Endothelial cell of umbilical vein (primary cell): ENCODE measurements at regions of chr13 and their contacts with region 1.

Region 1: GRCh38 chr13:19984430-19985218 is 26.1 kb downstream of the ZMYM2 start:
- DNase-seq: peak; percentile 45
- H3K4me3 ChIP-seq: no peak overlapping the region
- H3K27ac ChIP-seq: no peak overlapping the region
- H3K4me1 ChIP-seq: no peaks in the 10 kb centered on the region
- H3K27me3 ChIP-seq: no peaks in the 10 kb centered on the region
- CTCF ChIP-seq: peak; percentile 27 to 50
- POLR2A ChIP-seq: no peak

Region 2: DNA sequence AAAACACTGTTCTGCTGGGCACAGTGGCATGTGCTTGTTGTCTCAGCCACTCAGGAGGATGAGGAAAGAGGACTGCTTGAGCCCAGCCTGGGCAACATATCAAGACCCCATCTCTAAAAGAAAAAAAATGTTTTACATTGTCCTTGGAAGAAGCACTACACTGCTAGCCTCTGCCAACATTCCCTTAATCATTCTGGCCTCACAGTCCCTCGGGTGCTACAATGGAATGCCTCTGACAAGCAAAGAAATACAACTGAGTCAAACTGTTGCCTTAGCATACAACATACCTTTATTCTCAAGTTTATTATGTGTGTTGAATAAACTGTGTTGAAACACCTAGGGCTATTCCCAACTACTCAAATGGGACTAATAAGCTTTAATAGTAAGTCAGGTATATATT is 258.0 kb before region 1 on chr13:
- CTCF ChIA-PET with region 1: no interaction called
- POLR2A ChIA-PET with region 1: no interaction called
- dilution Hi-C with region 1: no loop called
- intact Hi-C with region 1: no loop called
- DNase-seq: no peak
- H3K4me3 ChIP-seq: no peak overlapping the region
- H3K27ac ChIP-seq: no peak overlapping the region
- H3K4me1 ChIP-seq: no peaks in the 10 kb centered on the region
- H3K27me3 ChIP-seq: no peaks in the 10 kb centered on the region
- CTCF ChIP-seq: no peak
- POLR2A ChIP-seq: no peak

Region 3: GRCh38 chr13:19810996-19811891 is 173.4 kb before region 1 on chr13:
- CTCF ChIA-PET with region 1: no interaction called
- POLR2A ChIA-PET with region 1: no interaction called
- dilution Hi-C with region 1: no loop called
- intact Hi-C with region 1: no loop called
- DNase-seq: no peak
- H3K4me3 ChIP-seq: no peak overlapping the region
- H3K27ac ChIP-seq: no peak overlapping the region
- H3K4me1 ChIP-seq: no peaks in the 10 kb centered on the region
- H3K27me3 ChIP-seq: no peaks in the 10 kb centered on the region
- CTCF ChIP-seq: no peak
- POLR2A ChIP-seq: no peak

Region 4: DNA sequence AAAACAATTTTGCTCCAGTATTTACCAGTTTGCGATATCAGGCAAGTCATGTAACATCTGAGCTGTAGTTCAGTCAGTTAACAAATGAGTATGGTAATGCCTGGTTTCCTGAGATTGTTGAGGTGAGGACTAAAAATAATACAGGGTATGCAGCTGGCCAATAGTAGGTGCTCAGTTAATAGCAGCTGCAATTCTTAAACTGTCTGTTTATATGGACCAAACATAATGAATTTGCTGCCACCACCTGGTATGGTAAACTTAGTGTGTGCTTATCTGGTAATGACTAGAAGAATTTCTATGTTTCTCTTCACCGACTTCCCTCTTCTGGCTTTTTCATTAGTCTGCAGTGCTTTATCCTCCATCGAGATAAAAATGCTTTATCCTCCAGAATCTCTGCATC is 17.0 kb before region 1 on chr13:
- CTCF ChIA-PET with region 1: interaction called, 12 read pairs
- POLR2A ChIA-PET with region 1: no interaction called
- dilution Hi-C with region 1: no loop called
- intact Hi-C with region 1: no loop called
- DNase-seq: peak; percentile 18
- H3K4me3 ChIP-seq: no peak overlapping the region
- H3K27ac ChIP-seq: no peak overlapping the region
- H3K4me1 ChIP-seq: no peaks in the 10 kb centered on the region
- H3K27me3 ChIP-seq: no peaks in the 10 kb centered on the region
- CTCF ChIP-seq: no peak
- POLR2A ChIP-seq: no peak